Posterior vena cava (tissue), 2 donors: ENCODE measurements at regions of chr6 and their contacts with region 1.

Region 1: DNA sequence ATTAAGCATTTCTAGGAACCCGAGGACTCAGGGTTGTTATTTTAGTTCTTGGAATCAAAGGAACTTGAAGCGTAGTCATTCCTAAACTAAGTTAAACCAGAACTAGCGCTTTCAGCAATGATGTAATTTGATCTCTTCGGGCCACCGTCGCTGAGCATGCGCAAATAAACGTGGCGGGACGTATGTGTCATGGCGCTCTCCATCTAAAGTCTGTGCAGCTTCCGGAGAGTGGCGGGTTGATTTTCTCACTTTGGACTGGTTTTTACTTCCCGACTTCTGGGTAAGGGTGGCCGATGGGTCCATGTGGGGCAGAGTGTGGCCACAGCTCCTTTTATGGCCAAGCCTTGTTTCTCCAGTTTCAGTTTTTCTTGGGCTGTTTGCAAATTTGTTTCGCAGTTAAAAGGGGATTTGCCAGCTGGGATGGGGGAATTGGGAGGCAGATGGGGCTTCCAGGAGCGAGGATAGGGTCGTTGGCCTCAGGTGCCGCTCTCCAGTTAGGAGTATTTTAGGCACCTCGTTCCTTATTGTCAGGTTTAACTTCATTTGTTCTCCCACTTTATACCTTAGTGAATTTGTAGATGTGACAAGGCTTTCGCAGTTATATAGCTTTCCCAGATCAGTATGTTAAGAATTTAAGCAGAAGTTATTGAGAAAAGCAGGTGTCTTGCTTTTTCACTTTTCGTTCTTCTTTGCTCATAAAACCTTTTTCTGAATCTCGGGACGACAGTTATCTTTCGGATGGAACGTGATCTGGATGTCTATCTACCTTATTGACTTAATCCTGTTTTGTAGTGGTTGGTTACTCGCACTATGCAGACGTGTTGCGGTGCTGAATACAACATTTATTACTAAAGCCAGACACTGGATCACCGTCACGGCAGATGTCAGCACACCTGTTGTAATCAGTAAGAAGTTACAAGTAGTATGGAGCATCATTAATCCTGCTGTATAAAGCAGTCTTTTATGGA is at the start of gene CDKAL1:
- DNase-seq: peak; percentile 97
- total RNA-seq, gene CDKAL1: 13.1 TPM

Region 2: GRCh38 chr6:20291764-20292580 is 242.6 kb before region 1 on chr6:
- intact Hi-C with region 1: loop called (anchors 2 to 5 kb)
- DNase-seq: no peak

Region 3: DNA sequence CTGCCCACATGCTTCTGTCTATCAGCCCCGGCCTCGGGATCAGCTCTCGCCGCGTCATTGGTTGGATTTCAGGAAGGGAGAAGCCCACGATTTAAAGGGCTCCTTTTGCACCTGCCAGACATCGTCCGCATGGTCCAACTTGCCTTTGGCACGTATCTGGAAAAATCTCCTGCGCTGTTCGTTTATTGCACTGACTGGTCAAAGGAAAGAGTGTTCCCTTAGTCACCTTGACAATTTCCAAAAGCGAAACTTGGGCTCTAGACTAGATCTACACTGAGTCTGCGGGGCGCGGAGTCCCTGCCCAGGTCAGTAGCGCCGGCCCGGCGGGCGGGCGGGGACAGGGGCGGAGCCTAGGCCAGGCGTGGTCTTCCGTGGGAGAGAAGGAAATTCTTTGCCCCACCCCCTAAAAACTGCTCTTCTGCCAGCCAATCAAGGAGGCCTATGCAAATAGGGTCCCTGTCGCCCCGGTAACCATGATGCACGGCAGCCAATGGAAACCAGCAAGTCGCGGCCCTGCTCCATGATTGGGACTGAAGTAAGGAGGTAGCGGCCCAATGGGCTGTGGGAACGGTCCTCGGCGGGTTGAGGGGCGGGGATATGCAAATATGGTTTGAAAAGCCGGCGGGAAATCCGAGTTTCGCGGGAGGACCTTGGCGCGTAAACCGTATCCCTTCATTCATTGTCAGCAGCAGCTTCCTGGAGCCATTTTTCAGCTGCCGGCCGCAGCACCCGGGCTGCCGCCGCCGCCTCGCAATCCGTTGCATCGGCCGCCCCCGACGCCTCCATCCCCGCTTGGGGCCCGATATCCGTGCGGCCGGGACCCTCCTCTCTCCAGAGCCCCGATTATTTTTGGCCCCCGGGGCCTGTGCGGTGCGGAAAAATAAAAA is 133.1 kb before region 1 on chr6 and contains the start of gene E2F3:
- intact Hi-C with region 1: loop called in 1 of 2 experiments (anchors 10 kb)
- DNase-seq: peak; percentile 100
- total RNA-seq, gene E2F3: 8.1 to 9.9 TPM

Region 4: GRCh38 chr6:20497216-20498040 is 37.2 kb before region 1 on chr6:
- intact Hi-C with region 1: no loop called
- DNase-seq: no peak